A673 (cell line): ENCODE measurements at regions of chr1 and their contacts with region 1.

Region 1: GRCh38 chr1:215544566-215544965 is 22.5 kb upstream of the KCTD3 start:
- DNase-seq: no peak
- H3K4me3 ChIP-seq: no peak overlapping the region
- H3K27ac ChIP-seq: no peak overlapping the region
- H3K4me1 ChIP-seq: no peaks in the 10 kb centered on the region
- H3K27me3 ChIP-seq: peaks cover 12% of the 10 kb centered on the region
- CTCF ChIP-seq: no peak

Region 2: GRCh38 chr1:214174508-214175199 is 1369.9 kb before region 1 on chr1:
- CTCF ChIA-PET with region 1: no interaction called
- POLR2A ChIA-PET with region 1: interaction called, 16 read pairs
- intact Hi-C with region 1: no loop called
- DNase-seq: no peak
- H3K4me3 ChIP-seq: no peak overlapping the region
- H3K27ac ChIP-seq: no peak overlapping the region
- H3K4me1 ChIP-seq: no peaks in the 10 kb centered on the region
- H3K27me3 ChIP-seq: peaks cover 81% of the 10 kb centered on the region
- CTCF ChIP-seq: no peak